ENCODE measurements at regions of chr18 and their contacts with region 1.

Region 1: DNA sequence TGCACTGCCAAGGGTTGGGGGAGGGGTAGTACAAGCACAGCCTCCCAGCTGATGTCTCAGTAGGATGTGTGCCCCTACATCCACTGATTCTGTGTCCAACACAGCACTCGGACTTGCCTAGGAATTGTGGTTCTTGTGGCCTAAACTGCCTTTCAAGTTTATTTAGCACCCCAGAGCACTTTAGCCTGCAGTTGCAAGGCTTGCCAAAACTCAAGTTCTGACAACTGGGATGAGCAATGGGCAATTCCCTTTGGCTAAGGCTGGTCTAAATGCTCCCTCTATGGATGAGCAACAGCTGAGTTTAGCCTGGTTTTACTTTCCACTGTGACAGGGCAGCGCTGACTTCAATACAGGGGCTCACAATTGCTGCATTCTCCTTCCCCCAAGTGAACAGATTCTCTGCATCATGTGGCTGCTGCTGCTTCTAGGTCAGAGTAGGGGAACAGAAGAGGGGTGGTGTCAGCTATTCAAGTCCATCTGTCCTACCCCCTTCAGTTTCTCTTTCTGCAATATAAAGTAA is 471.5 kb downstream of the PIK3C3 start:
- DNase-seq: no peak
- H3K4me3 ChIP-seq: no peak overlapping the region
- H3K27ac ChIP-seq: no peak overlapping the region
- H3K4me1 ChIP-seq: no peaks in the 10 kb centered on the region
- H3K27me3 ChIP-seq: no peaks in the 10 kb centered on the region
- CTCF ChIP-seq: no peak

Region 2: DNA sequence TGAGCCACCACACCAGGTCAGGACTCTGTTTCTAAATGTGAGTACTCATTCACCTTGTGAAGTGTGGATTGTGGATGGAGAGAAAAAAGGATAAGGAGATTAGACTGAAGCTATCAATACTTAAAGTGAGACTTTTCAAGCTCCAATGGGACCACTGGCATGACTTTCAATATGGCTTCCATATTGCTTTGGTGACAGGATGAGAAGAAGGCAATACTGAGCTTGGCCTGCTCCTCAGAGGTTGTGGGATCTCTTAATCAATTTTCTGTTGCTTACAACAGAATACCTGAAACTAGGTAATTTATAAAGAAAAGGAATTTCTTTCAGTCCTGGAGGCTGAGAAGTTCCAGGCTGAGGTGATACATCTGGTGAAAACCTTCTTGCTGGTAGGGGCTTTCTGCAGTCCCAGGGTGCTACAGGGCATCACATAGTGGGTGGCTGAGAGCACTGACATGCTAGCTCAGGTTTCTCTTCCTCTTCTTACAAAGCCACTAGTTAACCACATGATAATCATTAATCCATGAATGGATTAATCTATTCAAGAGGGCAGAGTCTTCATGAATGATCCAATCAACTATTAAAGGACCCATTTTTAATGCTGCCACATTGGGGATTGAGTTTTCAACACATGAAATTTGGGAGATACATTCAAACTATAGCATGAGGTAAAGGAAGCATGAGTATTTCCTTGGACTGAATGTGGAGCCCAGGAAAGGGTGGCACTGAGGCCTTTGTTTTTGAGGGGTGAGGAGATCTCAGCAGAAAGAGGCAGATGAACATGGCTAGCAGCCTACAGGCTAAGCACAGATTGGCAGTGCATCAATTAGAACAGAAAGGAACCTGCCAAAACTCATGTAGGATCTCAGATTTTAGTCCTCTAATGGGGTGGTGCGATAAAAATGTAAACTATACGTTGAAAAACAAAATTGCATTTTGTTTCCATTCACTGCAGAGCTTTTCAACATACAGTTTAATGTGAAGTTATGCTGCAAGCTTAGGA is 197.0 kb before region 1 on chr18:
- CTCF ChIA-PET with region 1: no interaction called
- POLR2A ChIA-PET with region 1: no interaction called
- intact Hi-C with region 1: no loop called
- DNase-seq: no peak
- H3K4me3 ChIP-seq: no peak overlapping the region
- H3K27ac ChIP-seq: no peak overlapping the region
- H3K4me1 ChIP-seq: no peaks in the 10 kb centered on the region
- H3K27me3 ChIP-seq: no peaks in the 10 kb centered on the region
- CTCF ChIP-seq: no peak

Region 3: GRCh38 chr18:42414746-42415454 is 11.7 kb before region 1 on chr18:
- CTCF ChIA-PET with region 1: no interaction called
- POLR2A ChIA-PET with region 1: no interaction called
- intact Hi-C with region 1: loop called (anchors 2 kb)
- DNase-seq: no peak
- H3K4me3 ChIP-seq: no peak overlapping the region
- H3K27ac ChIP-seq: no peak overlapping the region
- H3K4me1 ChIP-seq: no peaks in the 10 kb centered on the region
- H3K27me3 ChIP-seq: no peaks in the 10 kb centered on the region
- CTCF ChIP-seq: no peak